Heart left ventricle (tissue), 16 donors: ENCODE measurements at regions of chr12 and their contacts with region 1.

Region 1: DNA sequence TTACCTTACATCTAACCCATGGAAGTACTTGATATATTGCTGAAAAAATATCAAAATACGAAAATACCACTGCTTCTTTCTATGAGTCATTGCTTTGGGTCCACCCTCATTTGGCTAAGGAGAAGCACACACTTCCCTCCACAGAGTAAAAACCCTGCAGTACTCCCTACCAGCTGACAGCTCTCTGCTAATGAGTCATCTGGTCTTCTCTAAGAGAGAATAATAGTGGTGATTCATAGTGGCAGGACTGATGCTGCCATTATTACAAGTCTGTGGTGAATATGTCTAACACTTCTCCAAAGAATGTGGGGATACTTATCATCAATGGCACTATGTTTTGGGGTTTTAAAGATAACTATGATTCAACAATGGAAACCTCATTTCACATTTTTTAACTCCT is 90.7 kb downstream of the PPFIA2 start:
- DNase-seq: no peak
- ATAC-seq: peak in 1 of 4 donors; percentile 61
- H3K4me3 ChIP-seq: no peak overlapping the region
- H3K27ac ChIP-seq: no peak overlapping the region
- H3K4me1 ChIP-seq: no peaks in the 10 kb centered on the region
- H3K27me3 ChIP-seq: no peaks in the 10 kb centered on the region
- CTCF ChIP-seq: no peak
- POLR2A ChIP-seq: no peak

Region 2: DNA sequence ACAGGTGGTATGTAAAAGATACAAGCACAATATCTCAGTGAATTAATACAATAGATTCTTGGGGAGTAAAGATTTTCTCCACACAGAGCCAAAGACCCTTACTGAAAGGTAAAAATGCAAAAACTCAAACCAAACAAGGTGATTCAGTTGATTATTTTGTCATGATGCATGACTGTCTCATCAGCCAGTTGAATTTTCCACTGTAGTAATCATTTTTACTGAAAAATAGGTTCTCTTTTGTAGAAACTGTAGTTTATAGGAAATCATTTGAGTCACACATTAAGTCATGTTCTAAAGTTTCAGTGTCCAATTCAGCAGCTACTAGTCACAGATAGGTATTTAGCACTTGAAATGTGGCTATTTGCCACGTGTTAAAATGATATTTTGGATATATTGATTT is 37.1 kb after region 1 on chr12:
- intact Hi-C with region 1: loop called in 1 of 10 experiments (anchors 2 kb)
- DNase-seq: no peak
- ATAC-seq: no peak
- H3K4me3 ChIP-seq: no peak overlapping the region
- H3K27ac ChIP-seq: no peak overlapping the region
- H3K4me1 ChIP-seq: no peaks in the 10 kb centered on the region
- H3K27me3 ChIP-seq: no peaks in the 10 kb centered on the region
- CTCF ChIP-seq: no peak
- POLR2A ChIP-seq: no peak

Region 3: GRCh38 chr12:81779216-81779615 is 110.7 kb after region 1 on chr12:
- intact Hi-C with region 1: loop called in 1 of 10 experiments (anchors 5 kb)
- DNase-seq: no peak
- ATAC-seq: no peak
- H3K4me3 ChIP-seq: no peak overlapping the region
- H3K27ac ChIP-seq: no peak overlapping the region
- H3K4me1 ChIP-seq: no peaks in the 10 kb centered on the region
- H3K27me3 ChIP-seq: no peaks in the 10 kb centered on the region
- CTCF ChIP-seq: no peak
- POLR2A ChIP-seq: no peak